CD4-positive, alpha-beta memory T cell (primary cell): ENCODE measurements at regions of chr14 and their contacts with region 1.

Region 1: GRCh38 chr14:24108336-24108874 is 6.2 kb upstream of the DCAF11 start:
- DNase-seq: no peak
- H3K4me3 ChIP-seq: no peak overlapping the region
- H3K4me3 Mint-ChIP-seq: peak overlapping the region in 4 of 8 donors; percentile 30 to 64 (median 44)
- H3K27ac ChIP-seq: peak overlapping the region; percentile 45
- H3K27ac Mint-ChIP-seq: peak overlapping the region; percentile 82 to 96 (median 95)
- H3K4me1 ChIP-seq: peaks cover 18% of the 10 kb centered on the region
- H3K4me1 Mint-ChIP-seq: peaks cover 6 to 15% (median 12%) of the 10 kb centered on the region in 4 donors
- H3K27me3 ChIP-seq: no peaks in the 10 kb centered on the region
- H3K27me3 Mint-ChIP-seq: no peaks in the 10 kb centered on the region

Region 2: GRCh38 chr14:24051789-24052655 is 56.4 kb before region 1 on chr14 and contains the start of gene CARMIL3:
- CTCF ChIA-PET with region 1: interaction called, 392 read pairs
- POLR2A ChIA-PET with region 1: interaction called, 55 read pairs
- intact Hi-C with region 1: no loop called
- DNase-seq: peak; percentile 50 to 58 (median 53)
- H3K4me3 ChIP-seq: peak within 1 kb of the TSS in 1 of 2 donors; percentile 76
- H3K4me3 Mint-ChIP-seq: peak within 1 kb of the TSS; percentile 83 to 92 (median 88)
- H3K27ac ChIP-seq: peak within 1 kb of the TSS; percentile 16
- H3K27ac Mint-ChIP-seq: peak within 1 kb of the TSS in 5 of 7 donors; percentile 14 to 81 (median 68)
- H3K4me1 ChIP-seq: peaks cover 14% of the 10 kb centered on the region
- H3K4me1 Mint-ChIP-seq: peaks cover 10 to 17% (median 14%) of the 10 kb centered on the region in 4 donors
- H3K27me3 ChIP-seq: no peaks in the 10 kb centered on the region
- H3K27me3 Mint-ChIP-seq: peaks cover 6 to 8% of the 10 kb centered on the region in 2 donors
- total RNA-seq, gene CARMIL3: 0.15 to 0.22 TPM

Region 3: GRCh38 chr14:24093901-24094761 is 14.3 kb before region 1 on chr14 and contains the start of gene PCK2:
- CTCF ChIA-PET with region 1: interaction called, 412 read pairs
- POLR2A ChIA-PET with region 1: interaction called, 137 read pairs
- intact Hi-C with region 1: loop called (anchors 1 kb)
- DNase-seq: peak; percentile 53 to 75 (median 61)
- H3K4me3 ChIP-seq: peak within 1 kb of the TSS; percentile 82 to 90
- H3K4me3 Mint-ChIP-seq: peak within 1 kb of the TSS; percentile 91 to 100 (median 98)
- H3K27ac ChIP-seq: peak within 1 kb of the TSS; percentile 84
- H3K27ac Mint-ChIP-seq: peak within 1 kb of the TSS; percentile 84 to 98 (median 97)
- H3K4me1 ChIP-seq: peaks cover 26% of the 10 kb centered on the region
- H3K4me1 Mint-ChIP-seq: peaks cover 21 to 47% (median 33%) of the 10 kb centered on the region in 4 donors
- H3K27me3 ChIP-seq: no peaks in the 10 kb centered on the region
- H3K27me3 Mint-ChIP-seq: no peaks in the 10 kb centered on the region
- total RNA-seq, gene PCK2: 18.3 to 21.4 TPM

Region 4: GRCh38 chr14:24141097-24141880 is 32.9 kb after region 1 on chr14 and contains the start of gene EMC9:
- CTCF ChIA-PET with region 1: interaction called, 36 read pairs
- POLR2A ChIA-PET with region 1: interaction called, 347 read pairs
- intact Hi-C with region 1: no loop called
- DNase-seq: peak; percentile 98 to 100 (median 99)
- H3K4me3 ChIP-seq: peak within 1 kb of the TSS; percentile 83 to 91
- H3K4me3 Mint-ChIP-seq: peak within 1 kb of the TSS; percentile 85 to 97 (median 94)
- H3K27ac ChIP-seq: peak within 1 kb of the TSS; percentile 77
- H3K27ac Mint-ChIP-seq: peak within 1 kb of the TSS; percentile 76 to 95 (median 94)
- H3K4me1 ChIP-seq: peaks cover 74% of the 10 kb centered on the region
- H3K4me1 Mint-ChIP-seq: peaks cover 38 to 94% (median 61%) of the 10 kb centered on the region in 4 donors
- H3K27me3 ChIP-seq: no peaks in the 10 kb centered on the region
- H3K27me3 Mint-ChIP-seq: no peaks in the 10 kb centered on the region
- total RNA-seq, gene EMC9: 33.0 to 33.9 TPM

Region 5: GRCh38 chr14:24299255-24300195 is 191.1 kb after region 1 on chr14 and contains the starts of genes DHRS1 and NOP9:
- CTCF ChIA-PET with region 1: interaction called, 10 read pairs
- POLR2A ChIA-PET with region 1: no interaction called
- intact Hi-C with region 1: no loop called
- DNase-seq: peak; percentile 89 to 92 (median 90)
- H3K4me3 ChIP-seq: peak within 1 kb of the TSS; percentile 77 to 85
- H3K4me3 Mint-ChIP-seq: peak within 1 kb of the TSS; percentile 91 to 99 (median 94)
- H3K27ac ChIP-seq: peak within 1 kb of the TSS; percentile 87
- H3K27ac Mint-ChIP-seq: peak within 1 kb of the TSS; percentile 96 to 99 (median 98)
- H3K4me1 ChIP-seq: peaks cover 42% of the 10 kb centered on the region
- H3K4me1 Mint-ChIP-seq: peaks cover 32 to 66% (median 51%) of the 10 kb centered on the region in 4 donors
- H3K27me3 ChIP-seq: no peaks in the 10 kb centered on the region
- H3K27me3 Mint-ChIP-seq: no peaks in the 10 kb centered on the region
- total RNA-seq, gene DHRS1: 37.6 to 38.6 TPM
- total RNA-seq, gene NOP9: 23.1 to 28.1 TPM